Naive thymus-derived CD4-positive, alpha-beta T cell (primary cell): ENCODE measurements at regions of chr1 and their contacts with region 1.

Region 1: DNA sequence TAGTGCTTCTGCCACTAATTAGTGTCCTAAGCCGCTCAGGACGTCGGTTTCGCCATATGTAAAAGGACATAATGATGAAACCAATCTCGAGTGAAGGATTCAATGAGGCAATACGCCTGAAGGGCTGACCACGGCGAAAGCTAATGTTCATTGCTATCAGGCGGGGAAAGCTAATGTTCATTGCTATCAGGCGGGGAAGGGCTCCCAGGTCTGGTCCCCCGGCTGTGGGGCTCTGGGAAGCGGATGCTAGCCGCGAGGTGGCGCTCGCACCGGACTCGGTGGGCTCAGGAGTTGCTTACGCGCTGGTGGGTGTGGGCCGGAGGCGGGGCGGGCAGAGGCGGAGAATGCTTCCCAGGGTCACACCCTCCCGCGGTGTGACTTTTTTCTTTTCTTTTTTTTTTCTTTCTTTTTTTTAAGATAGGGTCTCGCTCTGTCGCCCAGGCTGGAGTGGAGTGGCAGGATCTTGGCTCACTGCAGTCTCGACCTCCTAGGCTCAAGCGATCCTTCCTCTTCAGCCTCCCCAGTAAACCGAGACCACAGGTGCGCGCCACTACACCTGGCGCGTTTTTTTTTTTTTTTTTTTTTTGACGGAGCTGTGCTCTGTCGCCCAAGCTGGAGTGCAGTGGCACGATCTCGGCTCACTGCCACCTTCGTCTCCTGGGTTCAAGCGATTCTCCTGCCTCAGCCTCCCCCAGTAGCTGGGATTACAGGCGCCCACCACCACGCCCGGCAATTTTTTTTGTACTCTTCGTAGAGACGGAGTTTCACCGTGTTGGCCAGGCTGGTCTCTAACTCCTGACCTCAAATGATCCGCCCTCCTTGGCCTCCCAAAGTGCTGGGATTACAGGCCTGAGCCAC is 1.1 kb upstream of the PEAR1 start:
- DNase-seq: peak; percentile 67 to 91 (median 79)
- ATAC-seq: peak; percentile 94
- H3K4me3 ChIP-seq: peak overlapping the region; percentile 41
- H3K4me3 Mint-ChIP-seq: peak overlapping the region; percentile 68 to 84 (median 75)
- H3K27ac ChIP-seq: no peak overlapping the region
- H3K27ac Mint-ChIP-seq: no peak overlapping the region
- H3K4me1 ChIP-seq: peaks cover 0 to 8% of the 10 kb centered on the region in 2 donors
- H3K4me1 Mint-ChIP-seq: peaks cover 8 to 25% (median 18%) of the 10 kb centered on the region in 7 donors
- H3K27me3 ChIP-seq: peaks cover 8 to 11% of the 10 kb centered on the region in 2 donors
- H3K27me3 Mint-ChIP-seq: peaks cover 21 to 51% (median 43%) of the 10 kb centered on the region in 5 donors

Region 2: GRCh38 chr1:156689035-156689952 is 203.1 kb before region 1 on chr1:
- CTCF ChIA-PET with region 1: interaction called, 19 read pairs
- POLR2A ChIA-PET with region 1: no interaction called
- intact Hi-C with region 1: loop called (anchors 1 kb)
- DNase-seq: peak; percentile 54 to 78 (median 71)
- ATAC-seq: peak; percentile 98
- H3K4me3 ChIP-seq: no peak overlapping the region
- H3K4me3 Mint-ChIP-seq: peak overlapping the region in 5 of 10 donors; percentile 48 to 78 (median 60)
- H3K27ac ChIP-seq: no peak overlapping the region
- H3K27ac Mint-ChIP-seq: peak overlapping the region in 3 of 9 donors; percentile 1 to 74 (median 60)
- H3K4me1 ChIP-seq: peaks cover 5 to 20% of the 10 kb centered on the region in 2 donors
- H3K4me1 Mint-ChIP-seq: peaks cover 20 to 35% (median 30%) of the 10 kb centered on the region in 7 donors
- H3K27me3 ChIP-seq: peaks cover 0 to 5% of the 10 kb centered on the region in 2 donors
- H3K27me3 Mint-ChIP-seq: peaks cover 38 to 62% (median 44%) of the 10 kb centered on the region in 5 donors

Region 3: GRCh38 chr1:156838981-156839410 is 53.4 kb before region 1 on chr1:
- CTCF ChIA-PET with region 1: interaction called, 12 read pairs
- POLR2A ChIA-PET with region 1: no interaction called
- intact Hi-C with region 1: loop called (anchors 1 kb)
- DNase-seq: peak in 8 of 9 donors; percentile 30 to 74 (median 50)
- ATAC-seq: peak; percentile 75
- H3K4me3 ChIP-seq: no peak overlapping the region
- H3K4me3 Mint-ChIP-seq: peak overlapping the region in 1 of 10 donors; percentile 34
- H3K27ac ChIP-seq: no peak overlapping the region
- H3K27ac Mint-ChIP-seq: peak overlapping the region in 3 of 9 donors; percentile 47 to 81 (median 48)
- H3K4me1 ChIP-seq: peaks cover 0 to 8% of the 10 kb centered on the region in 2 donors
- H3K4me1 Mint-ChIP-seq: peaks cover 1 to 52% (median 2%) of the 10 kb centered on the region in 7 donors
- H3K27me3 ChIP-seq: no peaks in the 10 kb centered on the region
- H3K27me3 Mint-ChIP-seq: peaks cover 24 to 43% (median 33%) of the 10 kb centered on the region in 5 donors

Region 4: GRCh38 chr1:156920233-156921052 is 28.0 kb after region 1 on chr1 and contains the start of gene LRRC71:
- CTCF ChIA-PET with region 1: interaction called, 4 read pairs
- POLR2A ChIA-PET with region 1: no interaction called
- intact Hi-C with region 1: loop called (anchors 1 kb)
- DNase-seq: peak; percentile 38 to 86 (median 53)
- ATAC-seq: peak; percentile 83
- H3K4me3 ChIP-seq: no peak within 1 kb of the TSS
- H3K4me3 Mint-ChIP-seq: peak within 1 kb of the TSS in 4 of 10 donors; percentile 7 to 38 (median 18)
- H3K27ac ChIP-seq: no peak within 1 kb of the TSS
- H3K27ac Mint-ChIP-seq: no peak within 1 kb of the TSS
- H3K4me1 ChIP-seq: peaks cover 0 to 3% of the 10 kb centered on the region in 2 donors
- H3K4me1 Mint-ChIP-seq: peaks cover 4 to 17% (median 12%) of the 10 kb centered on the region in 7 donors
- H3K27me3 ChIP-seq: peaks cover 16 to 31% of the 10 kb centered on the region in 2 donors
- H3K27me3 Mint-ChIP-seq: peaks cover 63 to 87% (median 77%) of the 10 kb centered on the region in 5 donors
- total RNA-seq, gene LRRC71: not detected

Region 5: GRCh38 chr1:156961709-156962108 is 69.3 kb after region 1 on chr1:
- CTCF ChIA-PET with region 1: interaction called, 3 read pairs
- POLR2A ChIA-PET with region 1: no interaction called
- intact Hi-C with region 1: loop called (anchors 1 to 2 kb)
- DNase-seq: peak in 7 of 9 donors; percentile 34 to 63 (median 49)
- ATAC-seq: peak; percentile 76
- H3K4me3 ChIP-seq: peak overlapping the region; percentile 5
- H3K4me3 Mint-ChIP-seq: peak overlapping the region; percentile 63 to 94 (median 76)
- H3K27ac ChIP-seq: no peak overlapping the region
- H3K27ac Mint-ChIP-seq: peak overlapping the region in 8 of 9 donors; percentile 5 to 77 (median 58)
- H3K4me1 ChIP-seq: peaks cover 13 to 29% of the 10 kb centered on the region in 2 donors
- H3K4me1 Mint-ChIP-seq: peaks cover 34 to 77% (median 59%) of the 10 kb centered on the region in 7 donors
- H3K27me3 ChIP-seq: no peaks in the 10 kb centered on the region
- H3K27me3 Mint-ChIP-seq: peaks cover 0 to 16% (median 0%) of the 10 kb centered on the region in 5 donors

Region 6: DNA sequence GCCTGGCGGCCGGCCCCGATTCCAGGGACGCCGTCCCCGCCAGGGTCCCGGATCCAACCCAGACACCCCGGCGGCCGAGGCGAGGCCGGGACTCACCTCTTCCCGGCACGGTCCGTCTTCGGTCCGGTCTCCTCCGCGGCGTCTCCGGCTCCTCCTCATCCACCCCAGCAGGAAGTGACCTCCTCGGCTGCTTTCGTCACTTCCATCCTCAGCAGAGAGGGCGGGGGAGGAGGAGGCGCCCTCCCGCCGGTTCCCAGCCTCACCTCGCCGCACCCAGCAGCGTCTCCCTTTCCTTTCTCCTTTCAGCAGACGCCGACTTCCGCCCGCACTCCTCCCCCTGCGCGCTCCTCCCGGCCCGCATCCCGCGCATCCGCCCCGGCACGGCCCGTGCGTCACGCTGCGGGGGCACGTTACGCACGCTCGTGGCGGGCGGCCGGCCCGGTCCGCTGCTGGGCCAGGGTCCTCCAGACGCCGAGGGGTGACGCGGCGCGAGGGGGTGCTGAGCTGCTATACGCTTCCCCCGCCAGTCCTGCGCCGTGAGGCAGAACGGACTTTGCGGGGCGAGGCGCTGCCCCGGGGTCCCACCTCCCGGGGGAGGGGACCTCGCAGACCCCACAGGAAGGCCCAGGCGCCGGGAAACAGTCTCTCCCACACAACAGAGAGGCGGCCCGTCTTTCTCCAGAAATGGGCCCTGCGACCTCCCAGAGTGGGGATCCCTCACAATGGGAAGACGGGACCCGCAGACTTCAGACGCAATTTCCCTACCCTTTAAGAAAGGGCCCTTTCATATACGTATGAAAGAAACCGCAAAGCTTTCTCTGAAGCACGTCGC is 246.0 kb after region 1 on chr1 and contains the start of gene ETV3:
- CTCF ChIA-PET with region 1: no interaction called
- POLR2A ChIA-PET with region 1: no interaction called
- intact Hi-C with region 1: loop called in 1 of 2 experiments (anchors 1 kb)
- DNase-seq: peak; percentile 65 to 90 (median 87)
- ATAC-seq: peak; percentile 87
- H3K4me3 ChIP-seq: peak within 1 kb of the TSS; percentile 84
- H3K4me3 Mint-ChIP-seq: peak within 1 kb of the TSS; percentile 90 to 97 (median 95)
- H3K27ac ChIP-seq: peak within 1 kb of the TSS; percentile 96
- H3K27ac Mint-ChIP-seq: peak within 1 kb of the TSS; percentile 83 to 98 (median 95)
- H3K4me1 ChIP-seq: peaks cover 43 to 48% of the 10 kb centered on the region in 2 donors
- H3K4me1 Mint-ChIP-seq: peaks cover 41 to 65% (median 57%) of the 10 kb centered on the region in 7 donors
- H3K27me3 ChIP-seq: no peaks in the 10 kb centered on the region
- H3K27me3 Mint-ChIP-seq: no peaks in the 10 kb centered on the region
- total RNA-seq, gene ETV3: 31.5 to 72.4 (median 53.3) TPM